Mucosa of descending colon (tissue), 3 donors: ENCODE measurements at regions of chr2 and their contacts with region 1.

Region 1: DNA sequence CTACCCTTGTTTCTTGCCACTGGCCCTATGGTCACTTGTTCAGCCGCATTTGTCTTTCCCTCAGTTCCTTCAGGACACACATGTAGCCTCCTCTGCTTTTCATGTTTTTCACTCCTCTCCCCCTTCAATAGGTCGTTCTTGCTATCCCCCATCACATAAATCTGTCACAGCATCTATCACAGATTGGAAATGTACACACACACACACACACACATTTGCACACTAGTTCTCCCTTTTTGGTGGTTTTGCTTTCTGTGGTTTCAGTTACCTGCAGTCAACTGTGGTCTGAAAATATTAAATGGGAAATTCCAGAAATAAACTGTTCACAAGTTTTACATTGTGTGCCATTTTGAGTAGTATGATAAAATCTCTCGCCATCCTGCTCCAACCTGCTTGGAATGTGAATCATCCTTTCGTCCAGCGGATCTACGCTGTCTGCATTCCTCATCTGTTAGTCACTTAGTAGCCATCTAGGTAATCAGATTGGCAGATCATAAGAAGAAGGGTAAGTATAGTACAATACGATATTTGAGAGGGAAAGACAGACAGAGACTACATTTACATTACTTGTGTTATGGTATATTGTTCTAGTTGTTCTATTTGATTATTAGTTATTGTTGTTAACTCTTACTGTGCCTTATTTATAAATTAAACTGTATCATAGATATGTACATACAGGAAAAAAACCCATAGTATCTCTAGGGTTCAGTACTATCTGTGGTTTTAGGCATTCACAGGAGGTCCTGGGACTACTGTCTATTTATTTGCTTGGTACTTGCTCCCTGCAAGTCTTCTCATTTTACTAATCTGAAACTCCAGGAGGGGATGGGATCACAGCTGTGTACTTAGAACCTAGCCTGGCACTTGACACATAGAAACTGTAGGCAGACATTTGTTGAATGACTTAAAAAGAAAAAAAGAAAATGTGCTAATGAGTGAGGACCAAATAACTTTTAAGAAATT is 86.1 kb upstream of the PNPT1 start:
- DNase-seq: no peak
- ATAC-seq: no peak
- H3K4me3 ChIP-seq: no peak overlapping the region
- H3K4me1 ChIP-seq: no peaks in the 10 kb centered on the region
- CTCF ChIP-seq: no peak

Region 2: DNA sequence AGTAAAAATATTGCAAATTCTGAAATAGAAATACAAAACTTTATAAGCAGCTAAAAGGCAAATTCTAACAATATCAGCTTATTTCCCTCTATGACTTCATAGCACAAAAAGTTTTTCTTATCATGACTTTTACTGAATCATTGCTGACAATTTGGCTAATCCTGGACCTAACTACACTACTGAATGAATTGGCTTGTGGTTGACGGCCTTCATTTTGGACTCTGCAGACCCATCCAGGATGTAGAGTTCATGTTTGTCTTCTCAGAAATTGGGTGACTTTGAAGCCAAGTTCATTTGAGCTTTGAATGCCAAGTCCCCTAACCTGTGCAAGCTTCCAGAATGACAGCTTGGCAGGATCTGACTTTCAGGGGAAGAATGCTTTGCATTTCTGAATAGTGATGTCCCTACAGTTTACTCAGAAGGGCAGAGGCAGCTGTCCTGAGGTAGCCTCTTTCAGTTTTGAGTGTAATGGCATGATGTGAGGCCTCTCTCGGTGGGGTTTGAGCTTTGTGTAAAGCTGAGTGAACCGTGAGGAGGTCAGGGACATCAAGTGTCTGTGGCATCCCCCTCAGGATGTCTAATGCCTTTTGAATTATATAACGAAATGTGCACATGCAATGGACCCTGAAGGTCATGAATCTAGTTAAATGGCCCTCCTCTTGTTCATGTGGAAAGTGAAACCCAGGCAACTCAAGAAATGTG is 95.8 kb after region 1 on chr2:
- intact Hi-C with region 1: loop called in 1 of 2 experiments (anchors 10 kb)
- DNase-seq: no peak
- ATAC-seq: no peak
- H3K4me3 ChIP-seq: no peak overlapping the region
- H3K4me1 ChIP-seq: no peaks in the 10 kb centered on the region
- CTCF ChIP-seq: no peak